Testis (tissue), 5 donors: ENCODE measurements at regions of chr9 and their contacts with region 1.

Region 1: GRCh38 chr9:127519301-127520166 is 68.2 kb downstream of the LRSAM1 start:
- DNase-seq: no peak
- H3K4me3 ChIP-seq: no peak overlapping the region
- H3K27ac ChIP-seq: peak overlapping the region in 1 of 2 donors; percentile 76
- H3K4me1 ChIP-seq: peaks cover 38% of the 10 kb centered on the region
- H3K27me3 ChIP-seq: no peaks in the 10 kb centered on the region
- CTCF ChIP-seq: no peak
- POLR2A ChIP-seq: no peak

Region 2: GRCh38 chr9:127267793-127268525 is 251.6 kb before region 1 on chr9:
- intact Hi-C with region 1: no loop called
- DNase-seq: no peak
- H3K4me3 ChIP-seq: no peak overlapping the region
- H3K27ac ChIP-seq: peak overlapping the region in 1 of 2 donors; percentile 41
- H3K4me1 ChIP-seq: no peaks in the 10 kb centered on the region
- H3K27me3 ChIP-seq: no peaks in the 10 kb centered on the region
- CTCF ChIP-seq: no peak
- POLR2A ChIP-seq: no peak

Region 3: GRCh38 chr9:127578955-127579853 is 59.7 kb after region 1 on chr9:
- intact Hi-C with region 1: loop called (anchors 5 kb)
- DNase-seq: peak; percentile 87
- H3K4me3 ChIP-seq: peak overlapping the region in 1 of 2 donors; percentile 23
- H3K27ac ChIP-seq: peak overlapping the region; percentile 66 to 76
- H3K4me1 ChIP-seq: peaks cover 29% of the 10 kb centered on the region
- H3K27me3 ChIP-seq: no peaks in the 10 kb centered on the region
- CTCF ChIP-seq: peak in 2 of 3 experiments; percentile 15 to 46
- POLR2A ChIP-seq: no peak

Region 4: DNA sequence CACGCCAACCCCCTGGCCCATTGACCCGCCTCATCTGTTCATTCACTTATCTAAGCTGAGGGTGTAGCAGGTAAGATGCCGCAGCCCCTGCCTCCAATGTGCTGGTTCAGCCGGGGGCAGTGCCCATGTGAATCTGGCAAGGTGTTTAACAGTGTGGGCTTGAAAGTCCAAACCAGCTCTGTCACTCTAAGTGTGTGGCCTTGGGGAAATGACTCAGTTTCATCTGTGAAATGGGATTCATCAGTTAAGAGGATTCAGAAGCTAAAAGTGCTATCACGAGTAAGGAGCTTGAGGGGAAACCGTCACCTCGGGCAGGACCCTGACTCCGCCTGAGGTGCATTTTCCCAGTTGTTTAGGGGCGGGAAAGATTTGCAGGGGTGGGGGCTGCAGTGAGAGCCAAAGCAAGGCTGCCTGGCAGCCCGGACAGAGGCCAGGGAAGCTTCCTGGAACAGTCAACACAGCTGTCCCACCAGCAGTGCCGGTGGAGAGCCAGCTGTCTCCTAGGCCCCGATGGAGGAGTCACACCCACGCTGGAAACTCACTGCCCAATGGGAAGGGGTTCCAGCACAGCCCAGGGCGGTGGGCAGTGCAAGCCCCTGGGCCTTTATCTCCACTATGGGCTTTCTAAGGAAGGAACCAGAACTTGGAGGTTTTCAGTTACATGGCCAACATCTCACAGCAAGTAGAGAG is 841.9 kb after region 1 on chr9:
- intact Hi-C with region 1: no loop called
- DNase-seq: no peak
- H3K4me3 ChIP-seq: no peak overlapping the region
- H3K27ac ChIP-seq: peak overlapping the region in 1 of 2 donors; percentile 29
- H3K4me1 ChIP-seq: peaks cover 8% of the 10 kb centered on the region
- H3K27me3 ChIP-seq: no peaks in the 10 kb centered on the region
- CTCF ChIP-seq: no peak
- POLR2A ChIP-seq: no peak